Mammary epithelial cell (primary cell): ENCODE measurements at regions of chr2 and their contacts with region 1.

Region 1: DNA sequence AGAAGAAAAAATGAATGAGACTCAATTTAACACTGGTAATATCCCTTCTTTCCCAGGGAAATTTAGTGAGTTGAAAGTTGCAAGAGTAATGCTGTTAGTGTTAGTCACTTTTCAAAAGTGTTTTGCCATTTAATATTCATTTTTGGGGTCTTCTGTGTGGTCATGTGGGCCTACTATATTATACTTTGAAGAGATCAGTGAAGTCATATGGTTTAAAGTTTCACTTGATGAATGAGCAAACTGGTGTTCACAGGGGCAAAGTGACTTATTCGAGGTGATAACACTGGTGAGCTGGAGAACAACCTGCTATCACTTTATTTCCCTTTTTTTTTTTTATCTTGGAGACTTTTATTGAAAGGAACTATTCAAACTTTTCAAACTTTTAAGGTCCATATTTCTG is 196.0 kb downstream of the PLCL1 start:
- DNase-seq: no peak
- H3K4me3 ChIP-seq: no peak overlapping the region
- H3K27ac ChIP-seq: no peak overlapping the region
- H3K4me1 ChIP-seq: no peaks in the 10 kb centered on the region
- H3K27me3 ChIP-seq: no peaks in the 10 kb centered on the region
- CTCF ChIP-seq: no peak

Region 2: DNA sequence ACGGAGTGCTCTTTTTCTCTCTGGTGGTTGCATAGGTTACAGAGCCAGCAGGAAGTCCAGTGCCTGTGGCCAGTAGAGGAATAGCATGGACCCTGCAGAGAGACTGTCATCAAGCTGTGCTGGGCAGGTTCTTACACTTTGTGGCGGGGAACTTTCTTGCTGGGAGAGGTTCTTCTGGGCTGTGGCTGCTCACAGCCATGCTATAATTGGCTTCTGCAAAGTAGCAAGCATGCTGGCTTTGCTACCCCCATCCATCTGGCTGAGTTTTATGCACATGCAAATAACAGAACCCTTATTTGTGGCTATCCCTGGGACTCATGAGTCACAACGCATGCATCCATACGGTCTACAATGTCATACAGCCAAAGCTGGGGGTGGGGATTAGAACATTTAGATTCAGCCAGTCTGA is 127.1 kb before region 1 on chr2:
- CTCF ChIA-PET with region 1: no interaction called
- dilution Hi-C with region 1: no loop called
- in situ Hi-C with region 1: no loop called
- intact Hi-C with region 1: no loop called
- DNase-seq: no peak
- H3K4me3 ChIP-seq: no peak overlapping the region
- H3K27ac ChIP-seq: no peak overlapping the region
- H3K4me1 ChIP-seq: no peaks in the 10 kb centered on the region
- H3K27me3 ChIP-seq: no peaks in the 10 kb centered on the region
- CTCF ChIP-seq: no peak

Region 3: GRCh38 chr2:197949224-197949623 is 51.2 kb before region 1 on chr2:
- CTCF ChIA-PET with region 1: no interaction called
- dilution Hi-C with region 1: no loop called
- in situ Hi-C with region 1: no loop called
- intact Hi-C with region 1: loop called (anchors 2 kb)
- DNase-seq: no peak
- H3K4me3 ChIP-seq: no peak overlapping the region
- H3K27ac ChIP-seq: no peak overlapping the region
- H3K4me1 ChIP-seq: no peaks in the 10 kb centered on the region
- H3K27me3 ChIP-seq: peaks cover 2% of the 10 kb centered on the region
- CTCF ChIP-seq: no peak

Region 4: DNA sequence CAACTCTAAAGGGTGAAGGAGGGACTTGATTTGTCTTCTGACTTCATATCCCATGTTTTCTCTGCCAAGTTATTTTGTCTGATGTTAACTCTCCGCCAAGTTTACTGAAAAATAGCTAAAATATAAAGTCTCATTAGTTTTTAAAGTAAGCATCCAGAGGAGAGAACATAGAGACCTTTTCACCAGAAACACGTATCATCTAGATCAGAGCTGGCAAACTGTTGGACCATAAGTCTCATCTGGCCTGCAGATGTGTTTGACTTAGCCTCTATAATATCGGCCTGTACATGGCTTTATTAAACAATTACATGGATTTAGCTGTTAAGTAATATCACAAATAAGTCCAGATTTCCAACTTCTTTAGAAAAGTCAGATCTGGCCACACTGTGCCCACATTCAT is 13.4 kb before region 1 on chr2:
- CTCF ChIA-PET with region 1: no interaction called
- dilution Hi-C with region 1: no loop called
- in situ Hi-C with region 1: no loop called
- intact Hi-C with region 1: no loop called
- DNase-seq: no peak
- H3K4me3 ChIP-seq: no peak overlapping the region
- H3K27ac ChIP-seq: no peak overlapping the region
- H3K4me1 ChIP-seq: no peaks in the 10 kb centered on the region
- H3K27me3 ChIP-seq: no peaks in the 10 kb centered on the region
- CTCF ChIP-seq: no peak